Activated CD4-positive, alpha-beta memory T cell treated with anti-CD3 and anti-CD28 coated beads for 36 hours (primary cell): ENCODE measurements at regions of chr5 and their contacts with region 1.

Region 1: DNA sequence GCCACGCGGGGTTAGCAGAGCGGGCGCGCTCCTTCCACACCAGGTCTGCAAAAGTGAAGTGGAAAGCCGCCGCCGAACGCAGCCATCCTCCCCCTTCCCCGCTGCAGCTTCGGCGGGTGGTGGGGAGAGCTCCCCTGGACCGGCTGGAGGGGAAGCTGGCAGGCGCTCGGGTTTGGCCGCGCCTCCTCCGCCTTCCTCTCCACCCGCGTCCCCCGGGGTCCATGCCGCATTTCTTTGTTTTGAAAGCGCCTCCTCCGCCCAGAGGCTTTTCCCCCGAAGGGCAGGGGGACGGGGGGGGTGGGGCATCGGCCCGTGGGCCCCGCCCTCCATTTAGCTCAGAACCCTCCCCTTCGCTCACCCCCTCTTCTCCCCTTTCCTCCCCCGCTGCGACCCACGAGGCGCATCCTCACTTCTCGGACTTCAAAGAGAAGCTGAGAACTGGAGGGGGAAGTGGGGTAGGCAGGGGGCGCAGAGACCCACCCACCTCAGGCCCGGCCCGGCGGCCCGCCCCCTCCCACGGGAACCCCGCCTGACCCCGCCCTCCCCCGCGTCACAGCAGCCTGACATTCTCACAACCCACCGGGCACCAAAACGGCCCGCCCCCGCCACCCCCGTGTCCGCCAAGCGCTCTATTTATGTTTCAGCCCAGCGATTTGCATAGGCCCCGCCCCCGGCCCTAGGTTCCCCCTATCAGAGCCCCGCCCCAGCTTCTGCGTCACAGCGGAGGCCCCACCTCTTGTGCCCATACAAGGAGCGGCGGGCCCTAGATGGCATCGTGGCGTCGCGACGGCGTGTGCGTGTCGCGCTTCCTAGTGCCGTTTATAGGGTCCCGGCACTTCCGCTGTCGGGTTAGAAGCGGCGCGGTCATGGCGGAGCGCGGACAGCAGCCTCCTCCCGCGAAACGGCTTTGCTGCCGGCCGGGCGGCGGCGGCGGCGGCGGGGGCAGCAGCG is at the start of gene ZSWIM6:
- DNase-seq: peak; percentile 98
- H3K4me3 Mint-ChIP-seq: peak within 1 kb of the TSS; percentile 84
- H3K27ac Mint-ChIP-seq: peak within 1 kb of the TSS; percentile 87
- H3K4me1 Mint-ChIP-seq: peaks cover 43% of the 10 kb centered on the region
- H3K27me3 Mint-ChIP-seq: peaks cover 17% of the 10 kb centered on the region
- total RNA-seq, gene ZSWIM6: 5.5 to 5.7 TPM

Region 2: DNA sequence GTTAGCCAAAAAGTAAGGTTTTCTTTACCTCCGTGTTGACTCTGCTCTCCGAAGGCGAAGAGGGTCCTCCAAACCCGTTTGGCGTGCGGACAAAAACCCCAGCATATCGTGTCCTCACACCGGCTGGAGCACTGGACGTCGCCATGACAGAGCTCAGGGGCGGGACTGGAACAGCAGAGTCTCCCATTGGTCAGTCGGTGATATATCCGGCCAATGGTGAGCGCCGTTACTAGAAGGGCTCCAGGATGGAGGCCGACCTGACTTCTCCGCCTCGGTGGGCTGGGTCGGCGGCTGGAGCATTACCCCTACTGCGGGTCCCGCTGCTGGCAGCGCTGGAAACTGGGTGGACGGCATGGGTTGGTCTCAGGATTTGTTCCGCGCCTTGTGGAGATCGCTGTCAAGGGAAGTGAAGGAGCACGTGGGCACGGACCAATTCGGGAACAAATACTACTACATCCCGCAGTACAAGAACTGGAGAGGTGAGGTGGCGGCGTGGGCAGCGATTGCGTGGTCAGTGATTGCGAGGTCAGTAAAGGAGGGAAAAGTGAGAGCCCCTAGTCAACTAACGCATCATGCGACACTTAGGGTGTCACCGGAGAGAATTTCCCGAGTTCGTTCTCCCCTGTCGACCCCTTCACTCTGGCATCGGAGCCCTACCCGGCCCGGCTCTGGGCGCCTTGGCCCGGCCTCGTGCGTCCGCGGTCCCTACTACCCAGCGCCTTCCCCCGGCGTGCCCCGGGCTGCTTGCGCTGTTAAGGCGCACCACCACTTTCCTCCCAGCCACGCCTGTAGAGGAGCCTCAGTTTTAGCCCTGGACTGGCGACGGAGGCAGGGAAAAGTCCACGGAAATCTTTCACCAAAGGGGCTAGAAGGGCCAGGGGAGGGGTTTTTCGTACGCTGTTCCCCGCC is 386.5 kb before region 1 on chr5 and contains the starts of genes ERCC8 and NDUFAF2:
- CTCF ChIA-PET with region 1: interaction called, 3 read pairs
- POLR2A ChIA-PET with region 1: interaction called, 4 read pairs
- intact Hi-C with region 1: loop called (anchors 5 kb)
- DNase-seq: peak; percentile 93
- H3K4me3 Mint-ChIP-seq: no peak within 1 kb of the TSS
- H3K27ac Mint-ChIP-seq: peak within 1 kb of the TSS; percentile 77
- H3K4me1 Mint-ChIP-seq: peaks cover 23% of the 10 kb centered on the region
- H3K27me3 Mint-ChIP-seq: no peaks in the 10 kb centered on the region
- total RNA-seq, gene ERCC8: 7.7 to 9.1 TPM
- total RNA-seq, gene NDUFAF2: 35.6 to 38.4 TPM

Region 3: DNA sequence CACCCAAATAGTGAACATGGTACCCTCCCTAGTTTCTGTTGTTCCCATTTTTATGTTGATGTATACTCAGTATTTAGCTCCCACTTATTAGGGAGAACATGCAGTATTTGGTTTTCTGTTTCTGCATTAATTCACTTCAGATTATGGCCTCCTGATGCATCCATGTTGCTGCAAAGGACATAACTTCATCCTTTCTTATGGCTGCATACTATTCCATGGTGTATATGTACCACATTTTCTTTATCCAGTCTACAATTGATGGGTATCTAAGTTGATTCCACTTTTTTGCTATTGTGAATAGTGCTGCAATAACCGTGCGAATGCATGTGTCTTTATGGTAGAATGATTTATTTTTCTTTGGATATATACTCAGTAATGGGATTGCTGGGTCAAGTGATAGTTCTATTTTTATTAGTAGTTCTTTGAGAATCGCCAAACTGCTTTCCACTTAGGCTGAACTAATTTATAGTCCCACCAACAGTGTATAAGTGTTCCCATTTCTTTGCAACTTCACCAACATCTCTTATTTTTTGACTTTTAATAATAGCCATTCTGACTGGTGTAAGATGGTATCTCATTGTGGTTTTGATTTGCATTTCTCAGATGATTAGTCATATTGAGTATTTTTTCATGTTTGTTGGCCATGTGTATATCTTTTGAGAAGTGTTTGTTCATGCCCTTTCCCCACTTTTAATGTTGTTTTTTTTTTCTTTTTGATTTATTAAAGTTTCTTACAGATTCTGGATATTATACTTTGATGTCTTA is 249.0 kb before region 1 on chr5:
- CTCF ChIA-PET with region 1: no interaction called
- POLR2A ChIA-PET with region 1: no interaction called
- intact Hi-C with region 1: no loop called
- DNase-seq: no peak
- H3K4me3 Mint-ChIP-seq: no peak overlapping the region
- H3K27ac Mint-ChIP-seq: no peak overlapping the region
- H3K4me1 Mint-ChIP-seq: no peaks in the 10 kb centered on the region
- H3K27me3 Mint-ChIP-seq: no peaks in the 10 kb centered on the region

Region 4: GRCh38 chr5:61162010-61162831 is 169.5 kb before region 1 on chr5 and contains the start of gene SMIM15:
- CTCF ChIA-PET with region 1: no interaction called
- POLR2A ChIA-PET with region 1: no interaction called
- intact Hi-C with region 1: loop called (anchors 1 kb)
- DNase-seq: peak; percentile 91
- H3K4me3 Mint-ChIP-seq: peak within 1 kb of the TSS; percentile 96
- H3K27ac Mint-ChIP-seq: peak within 1 kb of the TSS; percentile 96
- H3K4me1 Mint-ChIP-seq: peaks cover 35% of the 10 kb centered on the region
- H3K27me3 Mint-ChIP-seq: no peaks in the 10 kb centered on the region
- total RNA-seq, gene SMIM15: 56.9 to 67.2 TPM

Region 5: DNA sequence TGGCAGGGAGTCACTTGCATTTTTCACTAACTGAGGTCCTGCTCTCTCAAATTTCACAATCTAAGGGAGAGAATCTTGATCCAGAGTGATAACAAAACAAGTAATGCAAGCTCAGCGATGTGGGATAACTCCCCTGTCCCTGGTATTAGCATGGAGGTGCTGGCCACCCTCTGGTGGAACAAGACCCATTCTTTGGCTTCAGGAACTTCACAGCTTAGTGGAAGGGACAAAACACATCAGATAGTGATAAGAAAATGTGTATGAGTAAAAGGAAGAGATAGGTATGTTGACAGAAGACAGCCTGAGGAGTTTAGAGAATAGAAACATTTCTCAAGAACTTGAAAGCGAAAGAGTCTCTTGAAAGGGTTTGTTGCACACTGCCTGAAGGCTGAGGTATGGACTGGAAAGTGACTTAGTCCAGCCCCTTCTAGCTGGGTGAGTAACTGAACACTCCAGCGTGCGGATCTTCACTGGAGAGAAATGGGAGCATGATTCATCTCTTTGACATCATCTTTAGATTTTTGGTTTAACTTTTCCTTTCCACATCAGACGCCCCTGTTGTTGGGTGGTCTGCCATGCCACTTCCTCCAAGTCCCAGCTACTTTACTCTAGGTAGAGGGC is 25.1 kb before region 1 on chr5:
- CTCF ChIA-PET with region 1: interaction called, 5 read pairs
- POLR2A ChIA-PET with region 1: interaction called, 3 read pairs
- intact Hi-C with region 1: loop called (anchors 1 kb)
- DNase-seq: peak; percentile 62
- H3K4me3 Mint-ChIP-seq: no peak overlapping the region
- H3K27ac Mint-ChIP-seq: peak overlapping the region; percentile 64
- H3K4me1 Mint-ChIP-seq: peaks cover 26% of the 10 kb centered on the region
- H3K27me3 Mint-ChIP-seq: peaks cover 16% of the 10 kb centered on the region

Region 6: GRCh38 chr5:61461423-61461822 is 129.7 kb after region 1 on chr5:
- CTCF ChIA-PET with region 1: no interaction called
- POLR2A ChIA-PET with region 1: no interaction called
- intact Hi-C with region 1: no loop called
- DNase-seq: no peak
- H3K4me3 Mint-ChIP-seq: no peak overlapping the region
- H3K27ac Mint-ChIP-seq: no peak overlapping the region
- H3K4me1 Mint-ChIP-seq: peaks cover 7% of the 10 kb centered on the region
- H3K27me3 Mint-ChIP-seq: no peaks in the 10 kb centered on the region

Region 7: DNA sequence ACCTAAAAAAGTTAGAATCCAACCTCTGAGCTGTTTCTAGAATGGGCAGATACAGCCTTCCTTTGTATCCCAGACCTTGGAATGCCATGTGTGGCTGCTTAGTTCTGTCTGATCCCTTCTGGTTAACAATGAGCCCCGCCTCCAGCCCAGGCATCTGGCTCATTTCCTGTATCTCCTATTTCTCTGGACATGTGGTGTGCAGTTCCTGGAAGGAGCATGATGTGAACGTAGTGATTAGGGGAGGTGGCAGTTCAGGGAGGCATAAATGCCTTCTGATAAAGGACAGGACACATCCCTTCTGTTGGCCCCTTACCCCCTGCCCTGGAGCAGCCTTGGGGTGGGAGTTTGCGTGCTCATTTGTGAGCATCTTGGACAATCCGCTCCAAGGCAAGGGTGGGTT is 243.4 kb after region 1 on chr5:
- CTCF ChIA-PET with region 1: no interaction called
- POLR2A ChIA-PET with region 1: no interaction called
- intact Hi-C with region 1: loop called (anchors 5 kb)
- DNase-seq: no peak
- H3K4me3 Mint-ChIP-seq: no peak overlapping the region
- H3K27ac Mint-ChIP-seq: no peak overlapping the region
- H3K4me1 Mint-ChIP-seq: no peaks in the 10 kb centered on the region
- H3K27me3 Mint-ChIP-seq: no peaks in the 10 kb centered on the region

Region 8: DNA sequence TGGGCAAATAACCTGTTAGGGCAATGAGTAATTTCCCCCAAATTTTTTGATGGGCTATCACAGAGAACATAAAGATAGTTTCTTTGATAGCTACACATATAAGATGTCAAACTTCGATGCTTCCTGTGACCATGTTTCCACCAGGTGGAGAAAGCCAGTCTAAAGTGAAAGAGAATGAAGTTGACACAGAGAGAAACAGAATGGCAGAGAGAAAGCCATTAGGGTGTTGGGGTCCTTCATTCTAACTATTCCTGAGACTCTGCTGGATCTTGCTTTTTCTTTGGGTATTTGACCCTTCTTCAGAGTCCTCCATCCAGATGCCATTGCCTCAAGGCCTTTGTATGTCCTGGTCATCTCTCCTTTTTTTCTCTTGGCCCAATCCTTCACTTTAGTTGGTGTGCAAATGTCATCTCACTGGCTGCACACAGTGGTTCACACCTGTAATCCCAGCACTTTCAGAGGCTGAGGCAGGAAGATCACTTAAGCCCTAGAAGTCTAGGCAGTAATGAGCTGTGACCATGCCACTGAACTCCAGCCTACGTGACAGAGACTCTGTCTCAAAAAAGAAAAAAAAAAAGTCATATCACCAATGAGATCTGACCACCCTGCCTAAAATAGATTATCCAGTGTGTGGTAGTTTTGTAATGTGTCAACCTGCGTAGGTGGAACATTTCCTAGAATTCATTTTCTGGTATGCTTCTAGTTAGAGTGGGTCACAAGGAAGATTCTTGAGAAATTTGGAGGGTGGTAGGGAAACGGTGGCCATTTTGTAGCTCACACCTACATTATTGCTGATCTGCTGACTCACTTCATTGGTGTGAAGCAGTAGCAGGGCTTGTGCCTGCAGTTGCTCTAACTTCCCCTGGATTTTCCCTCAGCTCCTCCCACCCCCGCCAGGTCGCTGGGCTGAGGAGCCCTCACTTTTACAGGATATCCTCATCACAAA is 953.5 kb after region 1 on chr5:
- CTCF ChIA-PET with region 1: no interaction called
- POLR2A ChIA-PET with region 1: no interaction called
- intact Hi-C with region 1: loop called (anchors 5 kb)
- DNase-seq: peak; percentile 85
- H3K4me3 Mint-ChIP-seq: peak overlapping the region; percentile 36
- H3K27ac Mint-ChIP-seq: peak overlapping the region; percentile 98
- H3K4me1 Mint-ChIP-seq: peaks cover 72% of the 10 kb centered on the region
- H3K27me3 Mint-ChIP-seq: no peaks in the 10 kb centered on the region